Activated T-helper 1 cell treated with anti-CD3 and anti-CD28 coated beads, Interleukin-12 subunit alpha, Interleukin-12 subunit beta, Interleukin-2, Interleukin-4 antibody, amounts not matched to agents 30 ng/mL and 10 ng/mL and 1 ng/mL, durations not matched to agents 14 hours and 24 hours and 36 hours (primary cell): ENCODE measurements at regions of chr2 and their contacts with region 1.

Region 1: GRCh38 chr2:131673392-131674173 is 145.9 kb downstream of the CCDC74A start:
- DNase-seq: peak; percentile 56
- H3K4me3 Mint-ChIP-seq: no peak overlapping the region
- H3K27ac Mint-ChIP-seq: no peak overlapping the region
- H3K4me1 Mint-ChIP-seq: peaks cover 5% of the 10 kb centered on the region
- H3K27me3 Mint-ChIP-seq: peaks cover 44% of the 10 kb centered on the region

Region 2: GRCh38 chr2:131801210-131801744 is 127.7 kb after region 1 on chr2:
- intact Hi-C with region 1: loop called (anchors 2 kb)
- DNase-seq: no peak
- H3K4me3 Mint-ChIP-seq: no peak overlapping the region
- H3K27ac Mint-ChIP-seq: no peak overlapping the region
- H3K4me1 Mint-ChIP-seq: no peaks in the 10 kb centered on the region
- H3K27me3 Mint-ChIP-seq: peaks cover 7% of the 10 kb centered on the region